Activated T-helper 1 cell treated with anti-CD3 and anti-CD28 coated beads, Interleukin-12 subunit alpha, Interleukin-12 subunit beta, Interleukin-2, Interleukin-4 antibody, amounts not matched to agents 30 ng/mL and 10 ng/mL and 1 ng/mL, durations not matched to agents 14 hours and 24 hours and 36 hours (primary cell): ENCODE measurements at regions of chr1 and their contacts with region 1.

Region 1: DNA sequence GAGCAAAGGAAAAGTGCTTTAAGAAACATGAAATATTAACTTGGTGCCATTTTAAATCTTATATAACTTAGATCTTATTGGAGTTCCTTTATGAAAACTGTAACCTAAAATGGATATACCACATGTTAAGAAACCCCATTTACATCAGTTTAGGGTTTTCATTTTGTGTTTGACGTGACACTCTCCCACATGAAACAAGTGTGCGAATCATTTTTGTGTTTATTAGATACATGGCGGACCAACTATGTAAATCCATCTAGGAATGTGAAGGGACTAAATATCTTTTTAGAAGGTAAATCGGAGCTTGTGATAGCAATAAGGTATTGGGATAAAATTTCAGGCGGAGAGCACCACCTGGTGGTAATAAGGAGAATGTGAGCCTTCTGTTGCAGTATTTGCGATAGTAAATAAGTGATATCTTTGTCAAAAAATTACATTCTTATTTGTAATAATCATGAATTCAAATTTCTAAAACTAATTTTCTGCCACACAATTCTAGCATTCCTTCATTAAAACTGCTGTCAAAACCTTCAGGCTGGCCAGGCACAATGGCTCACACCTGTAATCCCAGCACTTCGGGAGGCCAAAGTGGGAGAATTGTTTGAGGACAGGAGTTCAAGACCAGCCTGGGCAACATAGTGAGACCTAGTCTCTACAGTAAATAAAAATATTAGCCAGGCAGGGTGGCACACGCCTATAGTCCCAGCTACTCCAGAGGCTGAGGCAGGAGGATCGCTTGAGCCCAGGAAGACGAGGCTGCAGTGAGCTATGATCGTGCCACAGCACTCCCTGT is 31.3 kb downstream of the SMAP2 start:
- DNase-seq: no peak
- H3K4me3 Mint-ChIP-seq: peak overlapping the region; percentile 70
- H3K27ac Mint-ChIP-seq: peak overlapping the region; percentile 94
- H3K4me1 Mint-ChIP-seq: peaks cover 75% of the 10 kb centered on the region
- H3K27me3 Mint-ChIP-seq: no peaks in the 10 kb centered on the region

Region 2: DNA sequence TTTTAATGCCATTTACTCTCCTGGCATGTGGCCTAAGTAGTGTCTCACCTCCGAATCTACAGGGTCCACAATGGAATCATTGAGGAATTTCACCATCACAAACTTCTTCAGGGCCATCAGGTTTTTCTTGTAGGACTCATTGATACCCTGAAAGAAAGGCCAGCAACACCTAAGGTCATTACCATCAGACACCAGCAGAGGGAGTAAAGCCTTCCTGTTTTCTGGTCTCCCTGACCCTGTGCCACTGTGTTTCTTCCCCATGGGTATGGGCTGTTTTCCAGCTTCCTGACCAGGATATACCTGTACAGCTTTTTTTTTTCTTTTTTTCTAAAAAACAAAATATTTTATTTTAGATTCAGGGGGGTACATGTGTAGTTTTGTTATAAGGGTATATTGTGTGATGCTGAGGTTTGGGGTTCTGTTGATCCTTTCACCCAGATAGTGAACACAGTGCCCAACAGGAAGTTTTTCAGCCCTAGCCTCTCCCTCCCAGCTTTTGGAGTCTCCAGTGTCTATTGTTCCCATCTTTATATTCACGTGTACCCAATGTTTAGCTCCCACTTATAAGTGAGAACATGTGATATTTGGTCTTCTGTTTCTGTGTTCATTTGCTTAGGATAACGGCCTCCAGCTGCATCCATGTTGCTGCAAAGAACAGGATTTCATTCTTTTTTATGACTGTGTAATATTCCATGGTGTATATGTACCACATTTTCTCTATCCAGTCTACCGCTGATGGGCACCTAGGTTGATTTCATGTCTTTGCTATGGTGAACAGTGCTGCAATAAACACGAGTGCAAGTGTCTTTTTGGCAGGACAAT is 326.1 kb before region 1 on chr1:
- intact Hi-C with region 1: loop called (anchors 2 kb)
- DNase-seq: peak; percentile 40
- H3K4me3 Mint-ChIP-seq: no peak overlapping the region
- H3K27ac Mint-ChIP-seq: peak overlapping the region; percentile 75
- H3K4me1 Mint-ChIP-seq: peaks cover 9% of the 10 kb centered on the region
- H3K27me3 Mint-ChIP-seq: no peaks in the 10 kb centered on the region

Region 3: DNA sequence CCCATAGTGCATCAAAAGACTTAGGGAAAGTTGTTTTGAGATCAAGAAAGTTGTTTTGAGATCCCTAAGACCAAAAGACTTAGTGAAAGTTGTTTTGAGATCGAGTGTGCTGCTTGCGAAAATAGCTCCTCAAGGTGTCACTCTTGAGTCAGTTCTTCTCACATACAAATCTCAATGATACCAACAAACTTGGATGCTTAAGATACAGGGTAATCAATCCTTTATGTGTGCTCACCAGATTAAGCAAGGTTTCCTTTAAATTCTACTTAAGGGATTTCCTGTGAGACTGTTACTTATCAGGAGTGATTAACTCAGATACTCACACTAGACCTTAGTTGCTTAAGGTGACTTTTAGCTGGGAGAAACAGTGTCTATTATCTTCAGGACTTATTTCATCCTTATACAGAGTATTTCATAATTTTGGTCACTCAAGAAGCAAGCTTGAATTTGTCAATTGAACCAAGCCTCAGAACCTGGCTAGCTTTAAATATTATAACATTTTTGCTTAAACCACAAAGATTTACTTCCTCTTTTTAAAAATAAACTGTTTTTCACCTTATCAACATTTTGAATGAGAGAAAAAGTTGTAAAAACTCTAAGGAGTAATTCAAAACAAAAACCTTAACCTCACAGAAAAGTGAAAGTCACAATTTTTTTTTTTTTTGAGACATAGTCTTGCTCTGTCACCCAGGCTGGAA is 251.6 kb before region 1 on chr1:
- intact Hi-C with region 1: loop called (anchors 1 kb)
- DNase-seq: peak; percentile 21
- H3K4me3 Mint-ChIP-seq: no peak overlapping the region
- H3K27ac Mint-ChIP-seq: peak overlapping the region; percentile 21
- H3K4me1 Mint-ChIP-seq: peaks cover 13% of the 10 kb centered on the region
- H3K27me3 Mint-ChIP-seq: peaks cover 12% of the 10 kb centered on the region

Region 4: GRCh38 chr1:40315239-40315794 is 89.5 kb before region 1 on chr1:
- intact Hi-C with region 1: loop called (anchors 2 kb)
- DNase-seq: peak; percentile 77
- H3K4me3 Mint-ChIP-seq: peak overlapping the region; percentile 78
- H3K27ac Mint-ChIP-seq: peak overlapping the region; percentile 23
- H3K4me1 Mint-ChIP-seq: peaks cover 49% of the 10 kb centered on the region
- H3K27me3 Mint-ChIP-seq: peaks cover 13% of the 10 kb centered on the region

Region 5: DNA sequence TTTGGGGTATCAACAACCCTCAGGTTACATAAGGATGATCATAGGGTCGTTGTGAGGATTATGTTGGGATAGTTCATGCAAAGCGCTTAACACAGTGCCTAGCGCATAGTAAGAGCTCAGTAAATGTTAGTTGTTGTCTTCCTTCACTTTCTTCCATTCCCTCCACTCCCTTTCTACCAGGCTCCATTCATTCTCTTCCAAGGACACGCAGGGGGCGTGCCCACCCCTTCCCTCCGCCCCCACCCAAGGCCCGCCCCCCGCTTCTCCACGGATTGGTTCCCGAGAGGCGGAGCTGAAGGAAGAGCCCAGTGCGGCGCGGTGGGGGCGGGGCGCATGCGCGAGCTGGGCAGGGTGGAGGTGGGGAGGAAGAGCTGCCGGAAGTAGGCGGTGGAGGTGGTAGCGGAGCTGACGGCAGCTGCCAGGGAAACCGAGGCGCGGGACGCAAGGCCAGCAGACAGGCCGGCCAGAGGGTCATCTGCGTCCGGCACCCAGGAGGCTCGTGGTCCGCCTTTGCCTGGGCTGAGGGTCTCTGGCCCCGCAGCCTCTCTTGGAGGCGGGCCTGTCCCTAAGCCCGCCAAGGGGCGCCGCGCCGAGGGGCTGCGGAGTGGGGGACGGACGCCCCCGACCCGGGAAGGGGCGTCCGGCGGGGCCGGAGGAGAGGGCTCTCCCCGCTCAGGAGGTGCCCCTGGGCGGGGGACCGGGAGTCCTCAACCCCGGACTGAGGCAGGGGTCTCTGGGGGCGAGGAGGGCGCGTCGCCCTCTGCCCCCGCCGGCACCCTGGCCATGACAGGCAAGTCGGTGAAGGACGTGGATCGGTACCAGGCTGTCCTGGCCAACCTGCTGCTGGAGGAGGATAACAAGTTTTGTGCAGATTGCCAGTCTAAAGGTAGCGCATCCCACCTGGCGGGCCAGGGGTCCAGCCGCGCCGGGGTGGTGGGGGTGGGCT is 31.3 kb before region 1 on chr1 and contains the start of gene SMAP2:
- intact Hi-C with region 1: loop called (anchors 5 kb)
- DNase-seq: peak; percentile 95
- H3K4me3 Mint-ChIP-seq: peak within 1 kb of the TSS; percentile 97
- H3K27ac Mint-ChIP-seq: peak within 1 kb of the TSS; percentile 99
- H3K4me1 Mint-ChIP-seq: peaks cover 59% of the 10 kb centered on the region
- H3K27me3 Mint-ChIP-seq: peaks cover 3% of the 10 kb centered on the region
- total RNA-seq, gene SMAP2: 196 and 201 TPM in 2 replicates

Region 6: DNA sequence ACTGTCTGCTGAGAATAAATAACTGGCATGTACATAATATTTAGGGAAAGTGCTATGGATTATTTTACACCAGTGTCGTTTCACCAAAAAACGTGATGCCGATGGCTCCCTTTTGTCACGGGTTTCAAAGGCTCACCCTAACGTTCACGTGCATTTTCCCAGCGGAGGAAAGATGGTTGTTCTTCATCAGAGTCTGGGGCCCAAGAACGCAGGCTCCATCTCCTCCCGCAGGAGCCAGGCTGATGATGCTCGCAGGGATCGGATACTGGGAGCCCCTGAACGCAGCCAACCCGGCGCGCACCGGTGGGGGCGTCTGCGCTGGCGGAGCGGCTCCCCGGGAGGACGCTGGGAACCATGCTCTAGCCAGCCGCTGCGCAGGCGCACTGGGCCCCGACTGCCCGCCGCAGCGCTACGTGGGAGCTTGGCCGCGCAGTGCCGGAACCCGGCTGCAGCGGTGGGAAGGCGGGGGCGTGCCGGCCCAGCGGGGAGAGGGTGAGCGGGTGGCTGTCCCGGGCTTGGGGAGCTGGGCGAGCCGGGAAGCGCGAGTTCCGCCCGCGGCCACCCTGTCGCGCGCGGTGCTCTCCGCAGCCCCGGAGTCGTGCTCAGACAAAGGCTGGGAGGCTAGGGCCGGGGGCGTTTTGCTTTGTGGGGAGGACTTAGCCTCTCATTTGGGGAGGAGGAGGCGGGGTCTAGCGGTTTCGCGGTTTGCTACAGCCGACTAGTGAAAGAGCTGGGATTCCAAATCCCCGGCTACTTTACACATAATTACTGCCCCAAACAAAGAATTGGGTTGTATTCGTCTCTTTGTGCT is 45.0 kb after region 1 on chr1 and contains the start of gene ZFP69B:
- intact Hi-C with region 1: loop called (anchors 2 kb)
- DNase-seq: peak; percentile 86
- H3K4me3 Mint-ChIP-seq: peak within 1 kb of the TSS; percentile 84
- H3K27ac Mint-ChIP-seq: peak within 1 kb of the TSS; percentile 90
- H3K4me1 Mint-ChIP-seq: peaks cover 35% of the 10 kb centered on the region
- H3K27me3 Mint-ChIP-seq: no peaks in the 10 kb centered on the region
- total RNA-seq, gene ZFP69B: 5.1 and 5.8 TPM in 2 replicates